Mammary epithelial cell (primary cell): ENCODE measurements at regions of chr17 and their contacts with region 1.

Region 1: DNA sequence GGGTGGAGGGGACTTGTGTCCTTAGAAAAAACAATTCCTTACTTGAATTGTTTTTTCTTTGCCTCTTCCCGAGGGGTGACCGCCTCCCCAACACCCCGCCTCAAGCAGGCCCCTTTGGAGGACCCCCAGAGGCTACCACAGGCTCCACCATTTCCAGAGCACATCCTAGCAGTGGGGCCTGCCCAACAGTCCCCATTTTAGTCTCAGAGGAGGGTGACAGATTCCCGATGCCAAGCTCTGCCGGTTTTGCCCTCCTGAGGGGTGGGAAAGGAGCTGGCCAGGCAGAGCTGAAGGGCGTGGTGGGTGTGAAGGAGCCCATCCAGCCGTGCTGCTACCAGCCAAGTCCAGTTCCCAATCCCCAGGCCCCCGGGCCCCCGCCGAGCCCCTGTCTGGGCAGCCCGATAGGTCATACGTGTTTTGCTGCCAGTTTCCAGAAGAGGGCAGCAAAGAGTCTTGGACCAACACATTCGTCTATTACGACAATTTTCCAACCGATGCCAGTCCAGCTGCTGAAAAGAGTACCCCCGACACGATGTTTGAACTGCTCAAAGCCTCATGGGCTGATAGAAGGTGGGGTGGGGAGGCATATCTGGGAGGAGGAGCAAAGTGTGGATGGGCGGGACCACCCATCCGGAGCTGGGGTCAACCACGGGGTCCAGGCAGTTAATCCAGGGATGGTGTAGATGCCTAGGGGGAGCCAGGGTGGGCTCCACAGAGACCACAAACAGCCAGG is 18.8 kb upstream of the GAA start:
- DNase-seq: peak; percentile 35
- H3K4me3 ChIP-seq: peak overlapping the region in 1 of 3 experiments; percentile 9
- H3K27ac ChIP-seq: no peak overlapping the region
- H3K4me1 ChIP-seq: no peaks in the 10 kb centered on the region
- H3K27me3 ChIP-seq: no peaks in the 10 kb centered on the region
- CTCF ChIP-seq: peak; percentile 72 to 73

Region 2: DNA sequence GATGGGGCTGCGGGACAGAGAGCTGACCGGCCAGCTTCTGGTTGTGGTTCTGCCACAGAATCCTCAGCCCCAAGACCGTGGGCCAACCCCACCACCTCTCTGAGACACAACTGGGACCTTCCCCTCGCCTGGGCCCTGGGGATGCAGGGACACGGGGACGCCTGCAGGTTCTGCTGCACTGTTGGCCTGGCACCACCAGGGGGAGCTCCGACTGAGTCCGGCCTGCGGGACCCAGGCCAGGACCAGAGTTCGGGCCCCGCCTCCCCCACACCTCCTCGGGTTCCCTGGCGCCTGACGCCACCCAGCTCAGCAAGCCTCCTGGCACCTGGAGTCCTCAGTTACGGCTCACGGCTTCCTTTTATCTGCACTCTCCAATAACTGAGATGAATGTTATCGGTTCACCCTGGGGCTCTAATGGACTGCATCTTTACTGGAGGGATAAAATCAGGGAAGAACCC is 74.2 kb before region 1 on chr17:
- CTCF ChIA-PET with region 1: no interaction called
- dilution Hi-C with region 1: no loop called
- in situ Hi-C with region 1: no loop called
- intact Hi-C with region 1: loop called (anchors 5 kb)
- DNase-seq: peak; percentile 48
- H3K4me3 ChIP-seq: no peak overlapping the region
- H3K27ac ChIP-seq: no peak overlapping the region
- H3K4me1 ChIP-seq: no peaks in the 10 kb centered on the region
- H3K27me3 ChIP-seq: no peaks in the 10 kb centered on the region
- CTCF ChIP-seq: peak; percentile 94 to 95

Region 3: GRCh38 chr17:80109713-80110446 is 27.3 kb after region 1 on chr17:
- CTCF ChIA-PET with region 1: interaction called, 11 read pairs
- dilution Hi-C with region 1: no loop called
- in situ Hi-C with region 1: no loop called
- intact Hi-C with region 1: no loop called
- DNase-seq: peak; percentile 92
- H3K4me3 ChIP-seq: no peak overlapping the region
- H3K27ac ChIP-seq: no peak overlapping the region
- H3K4me1 ChIP-seq: peaks cover 17% of the 10 kb centered on the region
- H3K27me3 ChIP-seq: no peaks in the 10 kb centered on the region
- CTCF ChIP-seq: no peak

Region 4: DNA sequence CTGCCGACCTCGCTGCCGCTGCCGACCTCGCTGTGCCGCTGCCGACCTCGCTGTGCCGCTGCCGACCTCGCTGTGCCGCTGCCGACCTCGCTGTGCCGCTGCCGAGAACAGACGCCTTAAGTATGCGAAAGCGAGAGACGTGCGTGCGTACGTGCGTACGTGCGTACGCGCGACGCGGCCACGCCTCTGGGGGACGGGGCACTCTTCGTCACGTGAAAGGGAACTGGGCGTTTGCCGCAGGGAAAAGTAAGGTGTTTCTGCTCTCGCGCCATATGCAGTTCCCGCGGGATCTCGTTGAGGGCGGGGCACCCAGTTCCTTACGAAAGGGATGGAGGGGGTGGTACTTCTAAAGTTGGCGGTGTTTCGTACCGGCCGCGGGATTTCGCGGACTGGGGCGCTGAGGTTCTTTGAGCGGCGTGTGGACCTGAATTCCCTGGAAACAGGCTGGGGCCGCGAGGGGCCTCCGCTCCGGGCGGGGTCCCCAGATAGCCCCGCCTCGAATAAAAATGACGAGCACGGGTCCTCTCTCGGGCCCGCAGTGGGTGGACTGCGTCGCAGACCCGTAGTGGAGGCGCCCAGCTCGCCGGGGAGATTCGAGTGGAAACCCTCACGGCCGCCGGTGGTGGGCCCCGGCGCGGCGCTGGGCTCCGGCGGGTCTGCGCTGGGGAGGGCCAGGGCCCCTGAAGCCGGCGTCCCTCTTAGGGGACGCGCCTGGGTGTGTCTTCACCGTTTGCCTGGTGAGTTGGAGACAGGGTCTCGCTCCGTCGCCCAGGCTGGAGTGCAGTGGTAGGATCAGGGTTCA is 64.7 kb after region 1 on chr17 and contains the start of gene EIF4A3:
- CTCF ChIA-PET with region 1: no interaction called
- dilution Hi-C with region 1: no loop called
- in situ Hi-C with region 1: no loop called
- intact Hi-C with region 1: loop called (anchors 1 kb)
- DNase-seq: peak; percentile 98
- H3K4me3 ChIP-seq: peak within 1 kb of the TSS; percentile 78 to 96 (median 82)
- H3K27ac ChIP-seq: peak within 1 kb of the TSS; percentile 81
- H3K4me1 ChIP-seq: peaks cover 14% of the 10 kb centered on the region
- H3K27me3 ChIP-seq: no peaks in the 10 kb centered on the region
- CTCF ChIP-seq: peak in 1 of 2 donors; percentile 6
- total RNA-seq, gene EIF4A3: 79.7 to 86.4 TPM

Region 5: DNA sequence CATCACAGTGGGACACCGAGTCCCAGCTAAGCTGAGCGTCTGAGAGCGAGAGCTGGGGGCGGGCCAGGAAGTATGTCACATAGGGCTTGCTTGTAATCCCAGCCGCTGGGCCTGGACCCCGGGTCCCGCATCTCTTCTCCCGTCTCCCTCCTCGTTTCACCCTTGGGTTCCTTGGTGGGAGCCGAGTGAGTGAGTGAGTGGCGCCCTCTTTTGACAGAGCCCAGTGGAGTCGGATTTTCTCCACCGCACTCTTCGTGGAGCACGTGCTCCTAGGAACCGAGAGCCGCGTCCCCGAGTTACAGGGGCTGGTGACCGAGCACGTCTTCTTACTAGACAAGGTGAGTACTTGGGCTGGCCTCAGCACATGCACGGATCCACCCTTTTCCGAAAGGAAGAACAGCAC is 281.6 kb after region 1 on chr17:
- CTCF ChIA-PET with region 1: no interaction called
- dilution Hi-C with region 1: no loop called
- in situ Hi-C with region 1: no loop called
- intact Hi-C with region 1: loop called (anchors 1 kb)
- DNase-seq: no peak
- H3K4me3 ChIP-seq: no peak overlapping the region
- H3K27ac ChIP-seq: no peak overlapping the region
- H3K4me1 ChIP-seq: peaks cover 13% of the 10 kb centered on the region
- H3K27me3 ChIP-seq: no peaks in the 10 kb centered on the region
- CTCF ChIP-seq: peak; percentile 41 to 53